ENCODE measurements at regions of chr15 and their contacts with region 1.

Region 1: DNA sequence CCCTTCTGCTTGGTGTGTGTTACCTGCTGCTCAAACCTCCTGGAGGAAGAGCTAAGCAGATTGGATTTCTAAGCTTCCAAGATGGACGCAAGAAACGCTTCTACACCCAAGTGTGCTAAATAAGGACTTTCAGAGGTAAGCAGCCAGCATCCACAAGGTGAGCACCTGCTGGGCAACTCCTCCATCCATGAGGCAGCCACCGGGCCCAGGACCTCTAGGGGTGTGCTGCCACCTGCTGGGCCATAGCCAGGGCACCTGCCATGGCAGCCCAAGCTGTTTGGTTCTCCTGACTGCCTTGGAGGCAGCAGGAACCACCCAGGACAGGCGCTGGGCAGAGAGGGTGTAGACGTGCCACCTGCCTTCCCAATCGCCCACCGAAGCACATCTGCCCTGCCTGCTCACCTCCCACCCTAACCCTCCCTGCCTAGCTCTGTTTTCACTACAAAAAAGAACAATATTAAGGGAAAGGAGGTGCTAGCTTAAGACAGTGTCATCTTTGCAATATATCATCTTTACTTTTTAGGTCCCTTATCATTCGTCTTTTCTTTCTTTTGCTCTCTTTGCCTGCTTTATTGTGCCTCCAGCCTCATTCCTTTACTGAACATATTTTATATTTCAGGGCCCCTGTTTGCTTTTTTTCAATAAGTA is 12.9 kb downstream of the C15orf62 start:
- DNase-seq: peak; percentile 76 to 88
- H3K4me3 ChIP-seq: no peak overlapping the region
- H3K4me3 Mint-ChIP-seq: no peak overlapping the region
- H3K27ac Mint-ChIP-seq: no peak overlapping the region
- H3K4me1 ChIP-seq: peaks cover 8% of the 10 kb centered on the region
- H3K4me1 Mint-ChIP-seq: peaks cover 8% of the 10 kb centered on the region
- H3K27me3 ChIP-seq: no peaks in the 10 kb centered on the region
- H3K27me3 Mint-ChIP-seq: no peaks in the 10 kb centered on the region
- CTCF ChIP-seq: peak; percentile 81 to 89

Region 2: GRCh38 chr15:40593588-40594428 is 188.9 kb before region 1 on chr15 and contains the start of gene KNL1:
- CTCF ChIA-PET with region 1: no interaction called
- POLR2A ChIA-PET with region 1: no interaction called
- intact Hi-C with region 1: loop called (anchors 10 kb)
- DNase-seq: peak; percentile 89 to 94
- H3K4me3 ChIP-seq: peak within 1 kb of the TSS; percentile 93
- H3K4me3 Mint-ChIP-seq: peak within 1 kb of the TSS; percentile 99
- H3K27ac Mint-ChIP-seq: peak within 1 kb of the TSS; percentile 100
- H3K4me1 ChIP-seq: peaks cover 8% of the 10 kb centered on the region; the same call in 1 of the 2 replicates
- H3K4me1 Mint-ChIP-seq: peaks cover 29% of the 10 kb centered on the region
- H3K27me3 ChIP-seq: no peaks in the 10 kb centered on the region
- H3K27me3 Mint-ChIP-seq: no peaks in the 10 kb centered on the region
- CTCF ChIP-seq: no peak
- total RNA-seq, gene KNL1: 24.8 and 29.5 TPM in 2 replicates

Region 3: GRCh38 chr15:40660686-40661085 is 122.0 kb before region 1 on chr15:
- CTCF ChIA-PET with region 1: no interaction called
- POLR2A ChIA-PET with region 1: no interaction called
- intact Hi-C with region 1: no loop called
- DNase-seq: no peak
- H3K4me3 ChIP-seq: no peak overlapping the region
- H3K4me3 Mint-ChIP-seq: no peak overlapping the region
- H3K27ac Mint-ChIP-seq: no peak overlapping the region
- H3K4me1 ChIP-seq: no peaks in the 10 kb centered on the region
- H3K4me1 Mint-ChIP-seq: no peaks in the 10 kb centered on the region
- H3K27me3 ChIP-seq: no peaks in the 10 kb centered on the region
- H3K27me3 Mint-ChIP-seq: no peaks in the 10 kb centered on the region
- CTCF ChIP-seq: no peak

Region 4: DNA sequence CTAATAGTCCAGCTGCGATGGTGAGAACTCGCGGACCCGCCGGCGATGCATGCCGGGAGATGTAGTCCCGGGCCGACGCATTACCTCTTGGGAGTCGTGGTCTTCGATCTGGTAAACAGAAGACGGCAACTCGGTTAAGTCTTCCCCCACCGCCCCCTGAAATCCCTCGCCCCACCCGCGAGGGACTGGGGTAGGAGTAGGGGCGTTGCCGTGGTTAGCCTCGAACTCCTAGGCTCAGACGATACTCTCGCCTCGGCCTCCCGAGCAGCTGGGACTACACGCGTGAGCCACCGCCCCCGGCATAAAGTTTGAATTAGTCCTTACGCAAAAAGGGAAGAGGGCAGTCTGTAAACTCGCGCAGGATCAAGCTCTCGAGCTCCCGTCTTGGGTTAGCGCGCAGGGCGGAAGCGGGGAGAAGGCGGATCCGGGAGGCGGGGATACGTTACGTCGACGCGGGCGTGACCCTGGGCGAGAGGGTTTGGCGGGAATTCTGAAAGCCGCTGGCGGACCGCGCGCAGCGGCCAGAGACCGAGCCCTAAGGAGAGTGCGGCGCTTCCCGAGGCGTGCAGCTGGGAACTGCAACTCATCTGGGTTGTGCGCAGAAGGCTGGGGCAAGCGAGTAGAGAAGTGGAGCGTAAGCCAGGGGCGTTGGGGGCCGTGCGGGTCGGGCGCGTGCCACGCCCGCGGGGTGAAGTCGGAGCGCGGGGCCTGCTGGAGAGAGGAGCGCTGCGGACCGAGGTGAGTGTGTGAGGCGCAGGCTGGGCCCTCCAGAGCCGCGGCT is 87.8 kb before region 1 on chr15 and contains the start of gene RAD51:
- CTCF ChIA-PET with region 1: interaction called, 10 read pairs
- POLR2A ChIA-PET with region 1: no interaction called
- intact Hi-C with region 1: no loop called
- DNase-seq: peak; percentile 93 to 95
- H3K4me3 ChIP-seq: peak within 1 kb of the TSS; percentile 83
- H3K4me3 Mint-ChIP-seq: peak within 1 kb of the TSS; percentile 92
- H3K27ac Mint-ChIP-seq: peak within 1 kb of the TSS; percentile 99
- H3K4me1 ChIP-seq: peaks cover 11% of the 10 kb centered on the region; the same call in 1 of the 2 replicates
- H3K4me1 Mint-ChIP-seq: peaks cover 7% of the 10 kb centered on the region
- H3K27me3 ChIP-seq: no peaks in the 10 kb centered on the region
- H3K27me3 Mint-ChIP-seq: no peaks in the 10 kb centered on the region
- CTCF ChIP-seq: no peak
- total RNA-seq, gene RAD51: 37.8 and 47.0 TPM in 2 replicates

Region 5: DNA sequence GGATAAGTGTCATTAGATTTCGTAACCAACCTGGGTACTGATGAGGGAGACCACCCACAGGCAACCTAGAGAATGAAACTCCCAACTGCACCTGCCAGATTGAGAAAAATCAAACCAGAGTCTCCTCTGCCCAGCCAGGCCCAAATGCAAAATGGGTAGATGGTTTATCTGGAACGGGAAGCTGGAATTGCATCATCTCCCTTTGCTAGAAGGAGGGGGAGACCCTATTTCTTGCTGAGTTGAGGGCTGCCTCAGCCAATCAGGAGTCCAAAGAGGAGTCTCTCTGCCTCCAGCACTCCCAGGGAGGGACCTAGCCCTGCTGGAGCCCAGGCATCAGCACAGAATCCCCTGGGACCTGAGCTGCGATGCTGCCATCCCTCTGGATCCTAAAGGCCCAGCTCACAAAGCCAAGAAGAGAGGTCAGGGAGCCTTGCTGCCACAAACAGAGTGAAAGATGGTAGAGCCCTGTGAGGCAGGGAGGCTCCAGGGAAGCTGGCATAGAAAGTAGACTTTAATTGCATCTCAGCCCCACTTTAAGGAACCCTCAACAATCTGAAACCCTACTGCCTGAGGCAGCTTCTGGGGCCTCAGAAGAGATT is 35.7 kb before region 1 on chr15:
- CTCF ChIA-PET with region 1: interaction called, 21 read pairs
- POLR2A ChIA-PET with region 1: interaction called, 3 read pairs
- intact Hi-C with region 1: loop called (anchors 1 kb)
- DNase-seq: no peak
- H3K4me3 ChIP-seq: no peak overlapping the region
- H3K4me3 Mint-ChIP-seq: no peak overlapping the region
- H3K27ac Mint-ChIP-seq: peak overlapping the region; percentile 42
- H3K4me1 ChIP-seq: peaks cover 15% of the 10 kb centered on the region
- H3K4me1 Mint-ChIP-seq: peaks cover 12% of the 10 kb centered on the region
- H3K27me3 ChIP-seq: no peaks in the 10 kb centered on the region
- H3K27me3 Mint-ChIP-seq: no peaks in the 10 kb centered on the region
- CTCF ChIP-seq: no peak

Region 6: DNA sequence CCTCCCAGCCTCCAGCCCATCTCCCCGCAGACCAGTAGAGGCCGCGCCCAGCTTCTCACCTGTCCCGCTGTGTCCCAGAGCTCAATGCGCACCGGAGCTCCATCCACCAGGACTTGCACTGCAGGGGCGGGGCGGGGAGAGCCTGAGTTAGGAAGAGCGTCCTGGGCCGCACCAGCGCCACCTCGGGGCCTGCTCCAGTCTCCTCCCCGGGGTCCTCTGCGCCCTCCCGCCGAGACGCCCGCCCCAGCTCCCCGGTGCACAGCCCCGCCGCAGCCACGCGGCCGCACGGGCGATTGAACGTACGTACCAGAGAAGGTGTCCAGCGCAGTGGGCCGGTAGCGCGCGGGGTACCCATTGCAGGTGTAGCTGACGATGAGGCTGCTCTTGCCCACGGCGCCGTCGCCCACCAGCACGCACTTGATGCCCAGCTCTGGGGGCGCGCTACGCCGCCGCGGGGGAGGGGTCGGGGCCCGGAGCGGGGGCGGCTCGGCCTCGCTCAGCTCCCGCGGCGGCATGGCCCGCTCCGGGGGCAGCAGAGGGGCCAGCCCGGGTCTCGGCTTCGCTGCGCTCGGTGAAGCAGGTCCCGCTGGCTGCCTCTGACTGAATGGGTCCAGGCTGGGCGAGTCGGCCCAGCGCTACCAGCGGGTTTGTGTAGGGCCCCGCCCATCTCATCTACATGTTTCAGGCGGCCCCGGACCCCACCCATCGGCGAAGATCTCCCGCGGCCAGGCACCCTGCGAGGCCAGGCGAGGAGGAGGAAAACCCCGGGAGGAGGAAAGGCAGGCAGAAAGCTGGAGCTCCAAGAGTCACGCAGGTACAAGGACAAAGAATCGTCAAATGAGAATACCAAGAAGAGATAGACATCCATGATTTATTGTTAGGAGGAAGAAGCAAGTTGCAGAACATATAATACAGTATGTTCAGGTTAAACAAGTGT is 91.2 kb after region 1 on chr15 and contains the start of gene RHOV:
- CTCF ChIA-PET with region 1: interaction called, 13 read pairs
- POLR2A ChIA-PET with region 1: no interaction called
- intact Hi-C with region 1: no loop called
- DNase-seq: peak; percentile 90 to 92
- H3K4me3 ChIP-seq: peak within 1 kb of the TSS; percentile 88
- H3K4me3 Mint-ChIP-seq: peak within 1 kb of the TSS; percentile 68
- H3K27ac Mint-ChIP-seq: peak within 1 kb of the TSS; percentile 64
- H3K4me1 ChIP-seq: peaks cover 15% of the 10 kb centered on the region
- H3K4me1 Mint-ChIP-seq: peaks cover 8% of the 10 kb centered on the region
- H3K27me3 ChIP-seq: no peaks in the 10 kb centered on the region
- H3K27me3 Mint-ChIP-seq: no peaks in the 10 kb centered on the region
- CTCF ChIP-seq: peak in 1 of 2 experiments; percentile 59
- total RNA-seq, gene RHOV: 3.2 and 4.4 TPM in 2 replicates

Measured in Caco-2 (cell line).